PC-9 (cell line): ENCODE measurements at regions of chr19 and their contacts with region 1.

Region 1: GRCh38 chr19:47273313-47273977 is 1.2 kb upstream of the INAFM1 start:
- DNase-seq: peak; percentile 85 to 90
- H3K4me3 ChIP-seq: peak overlapping the region; percentile 91
- H3K27ac ChIP-seq: peak overlapping the region; percentile 96
- H3K4me1 ChIP-seq: peaks cover 6% of the 10 kb centered on the region; the same call in 1 of the 2 replicates
- H3K27me3 ChIP-seq: no peaks in the 10 kb centered on the region
- CTCF ChIP-seq: no peak

Region 2: GRCh38 chr19:46825525-46825971 is 447.9 kb before region 1 on chr19:
- CTCF ChIA-PET with region 1: no interaction called
- POLR2A ChIA-PET with region 1: interaction called, 11 read pairs
- intact Hi-C with region 1: no loop called
- DNase-seq: peak in 1 of 2 experiments; percentile 93
- H3K4me3 ChIP-seq: no peak overlapping the region; the same call in 1 of the 2 replicates
- H3K27ac ChIP-seq: peak overlapping the region; percentile 49
- H3K4me1 ChIP-seq: peaks cover 58% of the 10 kb centered on the region
- H3K27me3 ChIP-seq: no peaks in the 10 kb centered on the region
- CTCF ChIP-seq: 0 out of 2 replicates have a peak, but pooled peaks have one; percentile 31

Region 3: GRCh38 chr19:47190167-47190727 is 83.2 kb before region 1 on chr19:
- CTCF ChIA-PET with region 1: no interaction called
- POLR2A ChIA-PET with region 1: no interaction called
- intact Hi-C with region 1: no loop called
- DNase-seq: peak; percentile 43 to 46
- H3K4me3 ChIP-seq: no peak overlapping the region
- H3K27ac ChIP-seq: 0 out of 2 replicates have a peak overlapping the region, but pooled peaks have one; percentile 7
- H3K4me1 ChIP-seq: 0 out of 2 replicates have a peak, but pooled peaks cover 6% of the 10 kb centered on the region
- H3K27me3 ChIP-seq: no peaks in the 10 kb centered on the region
- CTCF ChIP-seq: no peak

Region 4: GRCh38 chr19:47203254-47203653 is 70.2 kb before region 1 on chr19:
- CTCF ChIA-PET with region 1: no interaction called
- POLR2A ChIA-PET with region 1: no interaction called
- intact Hi-C with region 1: no loop called
- DNase-seq: no peak
- H3K4me3 ChIP-seq: no peak overlapping the region
- H3K27ac ChIP-seq: no peak overlapping the region
- H3K4me1 ChIP-seq: no peaks in the 10 kb centered on the region
- H3K27me3 ChIP-seq: no peaks in the 10 kb centered on the region
- CTCF ChIP-seq: no peak

Region 5: GRCh38 chr19:47315125-47315821 is 41.8 kb after region 1 on chr19:
- CTCF ChIA-PET with region 1: no interaction called
- POLR2A ChIA-PET with region 1: no interaction called
- intact Hi-C with region 1: no loop called
- DNase-seq: peak; percentile 80 to 98
- H3K4me3 ChIP-seq: no peak overlapping the region
- H3K27ac ChIP-seq: peak overlapping the region; percentile 70
- H3K4me1 ChIP-seq: peaks cover 28% of the 10 kb centered on the region
- H3K27me3 ChIP-seq: no peaks in the 10 kb centered on the region
- CTCF ChIP-seq: no peak

Region 6: GRCh38 chr19:47348819-47349795 is 75.7 kb after region 1 on chr19 and contains the start of gene DHX34:
- CTCF ChIA-PET with region 1: interaction called, 4 read pairs
- POLR2A ChIA-PET with region 1: interaction called, 10 read pairs
- intact Hi-C with region 1: no loop called
- DNase-seq: peak; percentile 99
- H3K4me3 ChIP-seq: peak within 1 kb of the TSS; percentile 95
- H3K27ac ChIP-seq: peak within 1 kb of the TSS; percentile 48; the same call in 1 of the 2 replicates
- H3K4me1 ChIP-seq: peaks cover 14% of the 10 kb centered on the region
- H3K27me3 ChIP-seq: no peaks in the 10 kb centered on the region
- CTCF ChIP-seq: peak; percentile 99
- total RNA-seq, gene DHX34: 23.0 TPM in 2 replicates

Region 7: DNA sequence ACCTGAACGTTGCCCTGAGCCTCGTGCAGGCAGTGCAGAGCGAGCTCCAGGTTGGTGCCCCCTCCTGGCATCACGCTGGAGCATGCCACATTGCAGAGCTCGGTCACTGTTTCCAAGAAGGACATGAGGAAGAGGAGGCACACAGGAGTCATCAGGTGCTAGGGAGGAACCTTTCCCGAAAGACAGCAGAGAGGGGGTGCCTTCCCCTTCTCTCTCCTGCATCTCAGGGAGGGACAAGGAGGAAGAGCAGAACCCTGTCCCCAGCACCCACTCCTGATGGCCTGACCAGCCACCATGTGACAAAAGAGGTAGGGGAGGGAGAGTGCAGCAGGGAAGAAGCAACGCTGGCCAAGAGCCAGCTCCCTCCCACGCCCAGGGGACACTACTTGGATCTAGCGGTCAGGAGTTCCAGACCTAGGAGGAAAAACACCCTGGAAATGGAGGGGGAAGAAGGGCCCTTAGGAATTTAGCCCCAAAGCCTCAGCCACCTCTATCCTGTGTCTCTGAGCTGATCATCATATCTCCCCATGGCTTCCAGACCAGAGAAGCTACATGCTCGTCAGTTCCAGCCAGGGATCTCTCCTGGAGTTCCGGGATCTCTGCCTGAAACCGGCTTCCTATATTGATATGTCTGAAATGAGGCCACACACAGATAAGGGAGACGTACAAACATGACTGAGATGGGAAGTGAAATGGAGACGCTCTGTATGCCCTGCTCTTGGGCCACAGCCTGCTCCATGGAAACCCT is 258.4 kb after region 1 on chr19:
- CTCF ChIA-PET with region 1: no interaction called
- POLR2A ChIA-PET with region 1: no interaction called
- intact Hi-C with region 1: no loop called
- DNase-seq: no peak
- H3K4me3 ChIP-seq: no peak overlapping the region
- H3K27ac ChIP-seq: no peak overlapping the region
- H3K4me1 ChIP-seq: no peaks in the 10 kb centered on the region
- H3K27me3 ChIP-seq: no peaks in the 10 kb centered on the region
- CTCF ChIP-seq: no peak

Region 8: GRCh38 chr19:47719047-47719859 is 445.8 kb after region 1 on chr19:
- CTCF ChIA-PET with region 1: no interaction called
- POLR2A ChIA-PET with region 1: interaction called, 20 read pairs
- intact Hi-C with region 1: no loop called
- DNase-seq: no peak
- H3K4me3 ChIP-seq: no peak overlapping the region
- H3K27ac ChIP-seq: no peak overlapping the region
- H3K4me1 ChIP-seq: peaks cover 19% of the 10 kb centered on the region
- H3K27me3 ChIP-seq: no peaks in the 10 kb centered on the region
- CTCF ChIP-seq: no peak

Region 9: GRCh38 chr19:47765523-47766358 is 492.3 kb after region 1 on chr19:
- CTCF ChIA-PET with region 1: no interaction called
- POLR2A ChIA-PET with region 1: interaction called, 19 read pairs
- intact Hi-C with region 1: no loop called
- DNase-seq: peak in 1 of 2 experiments; percentile 51
- H3K4me3 ChIP-seq: no peak overlapping the region
- H3K27ac ChIP-seq: no peak overlapping the region
- H3K4me1 ChIP-seq: no peaks in the 10 kb centered on the region
- H3K27me3 ChIP-seq: no peaks in the 10 kb centered on the region
- CTCF ChIP-seq: peak; percentile 91